ENCODE measurements at regions of chr12 and their contacts with region 1.

Region 1: DNA sequence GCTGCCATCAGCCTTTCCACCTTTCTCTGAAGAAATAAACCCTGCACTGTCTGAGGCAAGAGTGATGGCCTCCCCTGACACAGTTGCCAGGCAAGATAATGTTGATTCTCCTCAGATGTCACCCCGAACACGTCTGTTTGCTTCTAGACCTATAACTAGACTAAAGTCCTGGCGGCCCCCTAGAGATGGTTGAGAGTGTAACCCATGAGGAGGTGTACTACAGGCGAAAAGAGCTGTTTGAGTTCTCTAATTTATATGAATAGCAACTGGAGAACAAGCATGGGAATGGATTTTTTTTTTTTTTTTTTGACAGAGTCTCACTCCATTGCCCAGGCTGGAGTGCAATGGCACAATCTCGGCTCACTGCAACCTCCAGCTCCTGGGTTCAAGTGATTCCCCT is 33.0 kb upstream of the ATF7IP start:
- DNase-seq: no peak
- H3K4me3 ChIP-seq: no peak overlapping the region
- H3K27ac ChIP-seq: no peak overlapping the region
- H3K4me1 ChIP-seq: no peaks in the 10 kb centered on the region
- CTCF ChIP-seq: no peak

Region 2: DNA sequence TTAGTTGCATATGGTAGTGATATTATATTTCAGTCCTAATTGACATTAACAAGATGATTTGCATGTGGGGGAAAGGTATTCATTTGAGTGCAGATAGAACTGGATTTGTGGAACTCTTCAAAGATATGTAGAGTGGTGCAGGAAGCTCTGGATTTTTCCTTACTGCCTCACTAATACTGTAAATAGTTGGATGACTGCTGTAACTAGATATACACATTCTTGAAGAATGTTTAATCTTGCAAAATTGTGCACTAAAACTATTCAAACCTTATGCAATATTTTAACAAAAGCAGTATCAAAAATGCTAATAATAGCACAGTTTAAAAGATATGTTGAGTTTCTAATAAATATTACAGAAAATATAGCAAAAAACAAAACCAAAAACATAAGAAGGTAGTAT is 10.1 kb before region 1 on chr12:
- CTCF ChIA-PET with region 1: no interaction called
- POLR2A ChIA-PET with region 1: interaction called, 17 read pairs
- intact Hi-C with region 1: no loop called
- DNase-seq: no peak
- H3K4me3 ChIP-seq: no peak overlapping the region
- H3K27ac ChIP-seq: no peak overlapping the region
- H3K4me1 ChIP-seq: peaks cover 10% of the 10 kb centered on the region
- CTCF ChIP-seq: no peak